IMR-90 (cell line): ENCODE measurements at regions of chr6 and their contacts with region 1.

Region 1: GRCh38 chr6:26473758-26474438 is 16.1 kb downstream of the BTN2A1 start:
- DNase-seq: peak; percentile 97
- ATAC-seq: peak; percentile 90
- H3K4me3 ChIP-seq: peak overlapping the region; percentile 53
- H3K27ac ChIP-seq: peak overlapping the region; percentile 98
- H3K4me1 ChIP-seq: peaks cover 24% of the 10 kb centered on the region
- H3K27me3 ChIP-seq: no peaks in the 10 kb centered on the region
- CTCF ChIP-seq: no peak
- POLR2A ChIP-seq: peak; percentile 79
- RAD21 ChIP-seq: no peak

Region 2: GRCh38 chr6:26122793-26123674 is 350.9 kb before region 1 on chr6:
- CTCF ChIA-PET with region 1: no interaction called
- POLR2A ChIA-PET with region 1: no interaction called
- dilution Hi-C with region 1: no loop called
- in situ Hi-C with region 1: no loop called
- intact Hi-C with region 1: no loop called
- DNase-seq: peak; percentile 99
- ATAC-seq: peak; percentile 47
- H3K4me3 ChIP-seq: peak overlapping the region; percentile 54
- H3K27ac ChIP-seq: peak overlapping the region; percentile 89
- H3K4me1 ChIP-seq: peaks cover 5% of the 10 kb centered on the region
- H3K27me3 ChIP-seq: no peaks in the 10 kb centered on the region
- CTCF ChIP-seq: no peak
- POLR2A ChIP-seq: no peak; the same call in 1 of the 2 replicates
- RAD21 ChIP-seq: no peak

Region 3: DNA sequence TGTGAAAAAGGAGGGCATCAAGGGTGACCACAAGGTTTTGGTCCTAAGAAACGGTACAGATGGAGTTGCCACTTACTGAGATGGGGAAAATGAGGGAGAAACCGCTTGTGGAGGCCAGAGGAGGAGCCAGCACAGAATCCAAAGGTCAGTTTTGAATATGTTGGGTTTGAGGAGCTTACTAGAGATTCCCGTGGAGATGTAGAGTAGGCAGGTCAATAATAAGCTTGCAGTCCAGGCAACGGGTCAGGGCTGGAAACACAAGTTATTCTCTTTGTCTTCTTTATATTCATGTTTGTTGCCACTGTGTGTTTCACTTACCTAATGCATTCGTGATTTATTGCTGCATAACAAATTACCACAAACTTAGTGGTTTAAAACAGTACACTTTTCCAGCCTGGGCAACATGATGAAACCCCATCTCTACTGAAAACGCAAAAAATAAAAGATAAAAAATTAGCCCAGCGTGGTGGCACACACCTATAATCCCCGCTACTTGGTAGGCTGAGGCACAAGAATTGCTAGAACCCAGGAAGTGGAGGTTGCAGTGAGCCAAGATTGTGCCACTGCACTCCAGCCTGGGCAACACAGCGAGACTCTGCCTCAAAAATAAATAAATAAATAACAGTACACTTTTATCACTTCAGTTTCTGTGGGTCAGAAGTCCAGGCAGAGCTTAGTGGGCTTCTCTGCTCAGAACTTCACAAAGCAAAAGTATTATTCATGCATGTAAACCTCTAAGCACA is 111.6 kb before region 1 on chr6:
- CTCF ChIA-PET with region 1: interaction called, 12 read pairs
- POLR2A ChIA-PET with region 1: no interaction called
- dilution Hi-C with region 1: no loop called
- in situ Hi-C with region 1: no loop called
- intact Hi-C with region 1: no loop called
- DNase-seq: no peak
- ATAC-seq: no peak
- H3K4me3 ChIP-seq: no peak overlapping the region
- H3K27ac ChIP-seq: no peak overlapping the region
- H3K4me1 ChIP-seq: peaks cover 9% of the 10 kb centered on the region
- H3K27me3 ChIP-seq: no peaks in the 10 kb centered on the region
- CTCF ChIP-seq: no peak
- POLR2A ChIP-seq: no peak
- RAD21 ChIP-seq: no peak

Region 4: GRCh38 chr6:26497610-26498009 is 23.7 kb after region 1 on chr6:
- CTCF ChIA-PET with region 1: no interaction called
- POLR2A ChIA-PET with region 1: no interaction called
- dilution Hi-C with region 1: no loop called
- in situ Hi-C with region 1: no loop called
- intact Hi-C with region 1: no loop called
- DNase-seq: no peak
- ATAC-seq: no peak
- H3K4me3 ChIP-seq: no peak overlapping the region
- H3K27ac ChIP-seq: no peak overlapping the region
- H3K4me1 ChIP-seq: 0 out of 2 replicates have a peak, but pooled peaks cover 3% of the 10 kb centered on the region
- H3K27me3 ChIP-seq: peaks cover 24% of the 10 kb centered on the region
- CTCF ChIP-seq: no peak
- POLR2A ChIP-seq: no peak
- RAD21 ChIP-seq: no peak